Right lobe of liver (tissue), 6 donors: ENCODE measurements at regions of chr1 and their contacts with region 1.

Region 1: GRCh38 chr1:12658531-12659453 is 14.9 kb downstream of the AADACL4 start:
- DNase-seq: peak; percentile 64 to 79 (median 68)
- ATAC-seq: peak; percentile 92 to 98 (median 96)
- H3K4me3 ChIP-seq: no peak overlapping the region
- H3K27ac ChIP-seq: no peak overlapping the region
- H3K4me1 ChIP-seq: no peaks in the 10 kb centered on the region
- H3K27me3 ChIP-seq: no peaks in the 10 kb centered on the region
- CTCF ChIP-seq: peak; percentile 91 to 97 (median 96)
- POLR2A ChIP-seq: no peak

Region 2: DNA sequence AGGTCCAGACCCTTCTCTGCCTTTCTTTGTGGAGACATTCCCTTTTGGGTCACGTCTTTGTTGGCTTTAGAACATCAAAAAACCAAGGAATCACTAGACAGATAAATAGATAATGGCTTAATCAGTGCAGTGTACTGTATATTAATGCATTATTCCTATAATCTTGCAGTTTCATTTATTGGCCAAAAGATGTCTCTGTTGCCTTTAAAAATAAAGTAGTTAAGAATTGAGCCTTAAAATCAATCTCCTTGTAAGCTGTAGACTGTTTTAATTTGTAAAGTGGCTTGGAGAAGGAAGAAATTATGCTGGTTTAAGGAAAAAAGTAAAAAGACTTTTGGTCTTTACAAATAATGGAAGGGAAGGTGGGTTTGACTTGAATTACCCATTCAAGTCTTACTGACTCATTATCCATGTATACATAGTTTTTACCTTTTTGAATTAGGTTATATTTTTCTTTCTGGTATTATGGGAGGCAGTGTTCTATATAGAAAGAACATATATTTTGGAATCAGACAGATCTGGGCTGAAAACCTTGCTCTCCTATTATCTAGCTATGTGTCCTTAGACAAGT is 344.4 kb before region 1 on chr1:
- intact Hi-C with region 1: loop called (anchors 10 kb)
- DNase-seq: no peak
- ATAC-seq: peak; percentile 43 to 67 (median 50)
- H3K4me3 ChIP-seq: no peak overlapping the region
- H3K27ac ChIP-seq: no peak overlapping the region
- H3K4me1 ChIP-seq: no peaks in the 10 kb centered on the region
- H3K27me3 ChIP-seq: no peaks in the 10 kb centered on the region
- CTCF ChIP-seq: peak; percentile 35 to 52 (median 40)
- POLR2A ChIP-seq: no peak

Region 3: GRCh38 chr1:12528021-12528852 is 130.6 kb before region 1 on chr1:
- intact Hi-C with region 1: no loop called
- DNase-seq: peak; percentile 90 to 94 (median 90)
- ATAC-seq: peak; percentile 45 to 62 (median 58)
- H3K4me3 ChIP-seq: peak overlapping the region; percentile 18 to 49 (median 48)
- H3K27ac ChIP-seq: peak overlapping the region; percentile 55 to 95 (median 80)
- H3K4me1 ChIP-seq: peaks cover 0 to 72% (median 17%) of the 10 kb centered on the region in 4 donors
- H3K27me3 ChIP-seq: no peaks in the 10 kb centered on the region
- CTCF ChIP-seq: no peak
- POLR2A ChIP-seq: peak; percentile 29